ENCODE measurements at regions of chr1 and their contacts with region 1.

Region 1: GRCh38 chr1:179353546-179353945 is 12.2 kb upstream of the AXDND1 start:
- DNase-seq: no peak
- H3K4me3 ChIP-seq: no peak overlapping the region
- H3K27ac ChIP-seq: no peak overlapping the region
- H3K4me1 ChIP-seq: no peaks in the 10 kb centered on the region
- H3K27me3 ChIP-seq: no peaks in the 10 kb centered on the region
- CTCF ChIP-seq: no peak

Region 2: DNA sequence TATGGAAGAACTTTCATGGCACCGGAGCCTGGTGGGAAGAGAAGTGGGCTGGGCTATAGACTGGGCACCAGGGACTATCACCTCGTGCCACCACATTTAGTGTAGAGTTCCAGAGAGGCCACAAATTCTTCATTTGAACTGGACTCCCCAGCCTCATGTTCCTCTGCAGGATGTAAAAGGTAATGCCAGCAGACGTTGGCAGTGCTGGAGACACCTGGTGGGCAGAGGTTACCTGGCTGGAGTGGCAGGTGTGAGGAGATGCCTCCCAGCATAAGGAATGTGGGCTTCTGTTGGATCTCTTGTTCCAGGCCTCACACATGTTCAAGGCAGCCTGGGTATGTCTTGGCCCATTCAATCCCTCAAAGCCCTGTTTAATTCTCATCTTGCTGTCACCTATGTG is 805.4 kb before region 1 on chr1:
- CTCF ChIA-PET with region 1: no interaction called
- POLR2A ChIA-PET with region 1: no interaction called
- intact Hi-C with region 1: no loop called
- DNase-seq: no peak
- H3K4me3 ChIP-seq: no peak overlapping the region
- H3K27ac ChIP-seq: no peak overlapping the region
- H3K4me1 ChIP-seq: peaks cover 19% of the 10 kb centered on the region
- H3K27me3 ChIP-seq: no peaks in the 10 kb centered on the region
- CTCF ChIP-seq: no peak

Region 3: GRCh38 chr1:178768423-178768822 is 585.1 kb before region 1 on chr1:
- CTCF ChIA-PET with region 1: no interaction called
- POLR2A ChIA-PET with region 1: no interaction called
- intact Hi-C with region 1: no loop called
- DNase-seq: no peak
- H3K4me3 ChIP-seq: no peak overlapping the region
- H3K27ac ChIP-seq: no peak overlapping the region
- H3K4me1 ChIP-seq: no peaks in the 10 kb centered on the region
- H3K27me3 ChIP-seq: no peaks in the 10 kb centered on the region
- CTCF ChIP-seq: peak; percentile 78

Region 4: DNA sequence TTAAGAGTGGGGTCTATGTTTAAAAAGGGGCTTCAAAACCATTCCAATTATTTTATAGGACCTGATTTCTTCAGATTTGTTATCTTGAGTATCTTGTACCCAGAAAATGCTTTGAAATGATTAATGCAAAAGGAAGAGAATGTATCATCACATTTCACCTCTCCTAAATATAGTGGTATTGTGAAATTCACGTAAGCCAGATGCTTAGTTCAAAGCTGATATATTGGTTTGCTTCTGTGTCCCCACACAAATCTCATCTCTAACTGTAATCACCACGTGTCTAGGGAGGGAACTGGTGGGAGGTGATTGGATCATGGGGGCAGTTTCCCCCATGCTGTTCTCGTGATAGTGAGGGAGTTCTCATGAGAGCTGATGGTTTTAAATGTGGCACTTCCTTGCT is 51.5 kb before region 1 on chr1:
- CTCF ChIA-PET with region 1: no interaction called
- POLR2A ChIA-PET with region 1: no interaction called
- intact Hi-C with region 1: loop called (anchors 5 kb)
- DNase-seq: no peak
- H3K4me3 ChIP-seq: no peak overlapping the region
- H3K27ac ChIP-seq: no peak overlapping the region
- H3K4me1 ChIP-seq: peaks cover 7% of the 10 kb centered on the region; the same call in 1 of the 2 replicates
- H3K27me3 ChIP-seq: no peaks in the 10 kb centered on the region
- CTCF ChIP-seq: no peak

Region 5: GRCh38 chr1:179384027-179384426 is 30.5 kb after region 1 on chr1:
- CTCF ChIA-PET with region 1: no interaction called
- POLR2A ChIA-PET with region 1: no interaction called
- intact Hi-C with region 1: no loop called
- DNase-seq: no peak
- H3K4me3 ChIP-seq: no peak overlapping the region
- H3K27ac ChIP-seq: no peak overlapping the region
- H3K4me1 ChIP-seq: no peaks in the 10 kb centered on the region
- H3K27me3 ChIP-seq: no peaks in the 10 kb centered on the region
- CTCF ChIP-seq: no peak